ENCODE measurements at regions of chr12 and their contacts with region 1.

Region 1: DNA sequence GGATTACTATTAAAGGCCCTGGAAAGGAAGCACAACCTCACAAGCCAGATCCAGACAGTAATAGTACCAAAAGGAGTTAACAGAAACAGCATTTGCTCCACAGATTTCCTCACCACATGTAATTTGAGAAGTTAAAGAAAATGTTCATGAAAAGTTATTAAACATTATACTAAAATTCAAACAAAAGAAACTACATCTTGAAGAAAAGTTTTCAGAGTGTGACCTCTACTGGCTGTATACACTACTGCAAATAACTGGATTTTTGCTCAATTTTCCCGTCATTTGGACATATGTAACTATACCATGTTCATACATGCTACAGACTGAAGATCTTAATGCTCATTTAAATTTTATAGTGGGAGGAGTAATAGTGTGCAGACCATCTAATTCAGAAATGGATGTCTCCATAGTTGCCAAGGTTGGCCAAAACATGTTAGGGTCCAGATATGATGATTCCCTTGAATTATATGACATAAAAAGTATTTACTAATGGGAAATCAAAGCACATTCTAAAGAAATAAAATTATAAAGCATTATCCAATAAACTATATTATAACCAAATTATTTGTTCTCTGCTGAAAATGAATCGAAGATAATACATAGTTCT is 5.6 kb downstream of the KRR1 start:
- DNase-seq: no peak
- ATAC-seq: no peak
- H3K4me3 Mint-ChIP-seq: no peak overlapping the region
- H3K27ac Mint-ChIP-seq: peak overlapping the region; percentile 11
- H3K4me1 Mint-ChIP-seq: peaks cover 30% of the 10 kb centered on the region
- H3K27me3 Mint-ChIP-seq: no peaks in the 10 kb centered on the region

Region 2: GRCh38 chr12:75334384-75335030 is 171.3 kb before region 1 on chr12 and contains the start of gene GLIPR1L1:
- CTCF ChIA-PET with region 1: interaction called, 17 read pairs
- POLR2A ChIA-PET with region 1: no interaction called
- intact Hi-C with region 1: loop called (anchors 1 kb)
- DNase-seq: peak; percentile 91
- ATAC-seq: peak; percentile 82
- H3K4me3 Mint-ChIP-seq: peak within 1 kb of the TSS; percentile 61
- H3K27ac Mint-ChIP-seq: no peak within 1 kb of the TSS
- H3K4me1 Mint-ChIP-seq: peaks cover 25% of the 10 kb centered on the region
- H3K27me3 Mint-ChIP-seq: peaks cover 21% of the 10 kb centered on the region
- total RNA-seq, gene GLIPR1L1: not detected

Region 3: GRCh38 chr12:75437564-75437963 is 68.2 kb before region 1 on chr12:
- CTCF ChIA-PET with region 1: interaction called, 8 read pairs
- POLR2A ChIA-PET with region 1: no interaction called
- intact Hi-C with region 1: loop called (anchors 2 to 5 kb)
- DNase-seq: no peak
- ATAC-seq: peak; percentile 72
- H3K4me3 Mint-ChIP-seq: no peak overlapping the region
- H3K27ac Mint-ChIP-seq: no peak overlapping the region
- H3K4me1 Mint-ChIP-seq: no peaks in the 10 kb centered on the region
- H3K27me3 Mint-ChIP-seq: peaks cover 4% of the 10 kb centered on the region